K562 (cell line): ENCODE measurements at regions of chr19 and their contacts with region 1.

Region 1: GRCh38 chr19:35306473-35307246 is 14.7 kb downstream of the MAG start:
- DNase-seq: peak in 2 of 4 experiments; percentile 59 to 80
- ATAC-seq: peak; percentile 46
- H3K4me3 ChIP-seq: no peak overlapping the region
- H3K27ac ChIP-seq: peak overlapping the region; percentile 90
- H3K4me1 ChIP-seq: peaks cover 69% of the 10 kb centered on the region in 2 experiments
- H3K27me3 ChIP-seq: no peaks in the 10 kb centered on the region
- CTCF ChIP-seq: peak; percentile 54 to 57 (median 55); a peak in 5 of 6 replicates
- EP300 ChIP-seq: no peak
- POLR2A ChIP-seq: no peak
- RAD21 ChIP-seq: peak in 1 of 2 experiments; percentile 53; a peak in 2 of 4 replicates

Region 2: DNA sequence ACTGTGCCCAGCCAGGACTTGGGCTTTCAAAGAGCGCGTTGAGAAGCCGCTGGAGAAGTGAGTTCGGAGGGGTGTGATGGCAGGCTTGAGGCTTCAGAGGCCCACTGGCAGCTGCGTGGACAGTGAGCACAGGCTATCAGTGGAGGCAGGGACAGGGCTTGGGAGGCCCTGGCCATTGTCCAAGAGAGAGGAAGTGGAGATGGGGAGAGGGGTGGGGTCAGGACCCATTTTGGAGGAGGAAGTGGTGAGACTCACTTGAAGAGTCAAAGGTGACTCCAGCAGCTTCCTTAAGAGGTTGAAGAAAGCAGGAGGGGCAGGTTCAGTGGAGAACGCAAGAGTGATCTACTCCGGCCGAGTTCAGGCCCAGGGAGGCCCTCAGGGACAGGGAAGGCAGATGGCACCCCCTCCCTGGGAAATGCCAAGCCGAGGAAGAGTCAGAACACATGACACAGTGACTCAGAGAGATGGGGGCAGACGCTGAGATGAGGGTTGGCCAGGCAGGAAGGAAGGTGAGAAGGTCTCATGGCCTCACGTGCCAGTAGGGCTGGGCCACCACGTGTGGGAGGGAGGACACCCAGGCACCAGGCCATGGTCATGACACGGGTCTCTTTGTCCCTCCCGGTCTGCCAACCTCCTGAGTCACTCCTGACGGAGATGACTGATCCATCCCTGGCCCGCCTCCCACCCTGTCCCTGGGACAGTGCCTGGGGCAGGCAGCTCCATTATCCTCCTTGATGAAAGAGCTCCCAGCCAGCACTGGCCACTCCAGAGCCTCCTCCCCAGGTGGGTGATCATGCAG is 12.2 kb after region 1 on chr19:
- CTCF ChIA-PET with region 1: no interaction called
- POLR2A ChIA-PET with region 1: interaction called, 11 read pairs
- in situ Hi-C with region 1: no loop called
- intact Hi-C with region 1: no loop called
- DNase-seq: peak; percentile 46 to 75 (median 48)
- ATAC-seq: peak; percentile 62
- H3K4me3 ChIP-seq: no peak overlapping the region
- H3K27ac ChIP-seq: peak overlapping the region; percentile 69; the same call in 2 of the 3 replicates
- H3K4me1 ChIP-seq: peaks cover 37 to 38% of the 10 kb centered on the region in 2 experiments
- H3K27me3 ChIP-seq: no peaks in the 10 kb centered on the region
- CTCF ChIP-seq: no peak
- EP300 ChIP-seq: no peak
- POLR2A ChIP-seq: no peak
- RAD21 ChIP-seq: no peak

Region 3: GRCh38 chr19:35332817-35333216 is 26.2 kb after region 1 on chr19:
- CTCF ChIA-PET with region 1: no interaction called
- POLR2A ChIA-PET with region 1: no interaction called
- in situ Hi-C with region 1: no loop called
- intact Hi-C with region 1: no loop called
- DNase-seq: peak in 1 of 4 experiments; percentile 4
- ATAC-seq: no peak
- H3K4me3 ChIP-seq: no peak overlapping the region
- H3K27ac ChIP-seq: no peak overlapping the region
- H3K4me1 ChIP-seq: peaks cover 2 to 11% of the 10 kb centered on the region in 2 experiments; a peak in 3 of 5 replicates
- H3K27me3 ChIP-seq: no peaks in the 10 kb centered on the region
- CTCF ChIP-seq: no peak
- EP300 ChIP-seq: no peak
- POLR2A ChIP-seq: no peak
- RAD21 ChIP-seq: no peak